Activated CD8-positive, alpha-beta T cell treated with anti-CD3 and anti-CD28 coated beads, Interleukin-2, amount 10 ng/mL, durations not matched to agents 7 days and 5 days (primary cell): ENCODE measurements at regions of chr7 and their contacts with region 1.

Region 1: DNA sequence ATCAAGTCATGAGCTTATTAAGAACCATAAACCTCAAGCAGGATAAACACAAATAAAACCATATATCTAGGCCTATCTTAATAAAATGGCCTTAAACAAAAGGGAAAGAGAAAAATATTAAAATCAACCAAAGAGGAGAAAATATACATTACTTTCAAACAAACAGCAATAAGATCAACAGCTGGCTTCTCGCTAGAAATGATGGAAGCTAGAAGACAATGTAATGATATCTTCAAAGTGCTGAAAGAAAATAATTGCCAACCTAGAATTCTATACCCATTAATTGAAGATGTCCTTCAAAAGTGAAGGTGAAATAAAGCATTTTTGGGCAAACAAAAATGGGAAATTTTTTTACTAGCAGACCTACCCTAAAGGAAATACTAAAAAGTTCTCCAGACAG is 142.9 kb upstream of the PODXL start:
- DNase-seq: no peak
- ATAC-seq: no peak
- H3K4me3 Mint-ChIP-seq: no peak overlapping the region
- H3K27ac Mint-ChIP-seq: no peak overlapping the region
- H3K4me1 Mint-ChIP-seq: no peaks in the 10 kb centered on the region
- H3K27me3 Mint-ChIP-seq: peaks cover 4% of the 10 kb centered on the region

Region 2: GRCh38 chr7:131633342-131633843 is 65.9 kb before region 1 on chr7:
- CTCF ChIA-PET with region 1: no interaction called
- POLR2A ChIA-PET with region 1: no interaction called
- DNase-seq: no peak
- ATAC-seq: no peak
- H3K4me3 Mint-ChIP-seq: no peak overlapping the region
- H3K27ac Mint-ChIP-seq: no peak overlapping the region
- H3K4me1 Mint-ChIP-seq: no peaks in the 10 kb centered on the region
- H3K27me3 Mint-ChIP-seq: peaks cover 9% of the 10 kb centered on the region

Region 3: GRCh38 chr7:131688738-131689661 is 10.3 kb before region 1 on chr7:
- CTCF ChIA-PET with region 1: interaction called, 20 read pairs
- POLR2A ChIA-PET with region 1: no interaction called
- DNase-seq: peak; percentile 67
- ATAC-seq: peak; percentile 69
- H3K4me3 Mint-ChIP-seq: no peak overlapping the region
- H3K27ac Mint-ChIP-seq: no peak overlapping the region
- H3K4me1 Mint-ChIP-seq: no peaks in the 10 kb centered on the region
- H3K27me3 Mint-ChIP-seq: peaks cover 8% of the 10 kb centered on the region

Region 4: GRCh38 chr7:131723926-131724325 is 24.6 kb after region 1 on chr7:
- CTCF ChIA-PET with region 1: no interaction called
- POLR2A ChIA-PET with region 1: no interaction called
- DNase-seq: no peak
- ATAC-seq: no peak
- H3K4me3 Mint-ChIP-seq: no peak overlapping the region
- H3K27ac Mint-ChIP-seq: no peak overlapping the region
- H3K4me1 Mint-ChIP-seq: no peaks in the 10 kb centered on the region
- H3K27me3 Mint-ChIP-seq: peaks cover 3% of the 10 kb centered on the region